HCT116 (cell line): ENCODE measurements at regions of chr20 and their contacts with region 1.

Region 1: GRCh38 chr20:26216025-26216424 is 519.4 kb upstream of the ZNF337 start:
- DNase-seq: no peak
- ATAC-seq: no peak
- H3K4me3 ChIP-seq: no peak overlapping the region
- H3K27ac ChIP-seq: no peak overlapping the region
- H3K4me1 ChIP-seq: no peaks in the 10 kb centered on the region
- H3K27me3 ChIP-seq: peaks cover 15% of the 10 kb centered on the region
- CTCF ChIP-seq: no peak
- POLR2A ChIP-seq: no peak
- RAD21 ChIP-seq: no peak

Region 2: DNA sequence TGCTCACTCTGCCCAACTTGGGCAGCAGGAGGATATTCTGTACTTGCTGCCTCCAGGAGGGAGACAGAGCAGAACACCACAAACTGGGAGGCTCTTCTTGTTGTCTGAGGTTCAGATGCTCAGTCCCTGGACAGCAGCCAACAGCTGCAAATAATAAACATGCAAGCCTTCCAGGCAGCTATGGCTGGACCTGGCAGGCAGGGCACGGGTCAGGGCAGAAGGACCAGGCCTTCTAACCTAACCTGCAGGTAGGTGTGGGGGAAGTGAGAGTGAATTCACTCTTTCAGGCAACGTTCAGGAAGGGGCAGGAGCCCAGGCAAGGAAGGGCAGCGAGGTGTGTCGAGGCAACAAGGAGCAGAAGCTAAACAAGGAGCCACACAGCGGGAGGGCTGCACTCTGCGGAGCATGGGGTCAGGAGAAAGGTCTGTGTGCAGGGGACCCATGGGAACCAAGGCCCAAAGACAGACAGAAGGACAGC is 662.2 kb before region 1 on chr20:
- CTCF ChIA-PET with region 1: no interaction called
- POLR2A ChIA-PET with region 1: no interaction called
- RAD21 ChIA-PET with region 1: no interaction called
- intact Hi-C with region 1: no loop called
- DNase-seq: no peak
- ATAC-seq: no peak
- H3K4me3 ChIP-seq: no peak overlapping the region
- H3K27ac ChIP-seq: no peak overlapping the region
- H3K4me1 ChIP-seq: peaks cover 9 to 14% of the 10 kb centered on the region in 2 experiments
- H3K27me3 ChIP-seq: no peaks in the 10 kb centered on the region
- CTCF ChIP-seq: no peak
- POLR2A ChIP-seq: no peak
- RAD21 ChIP-seq: no peak

Region 3: DNA sequence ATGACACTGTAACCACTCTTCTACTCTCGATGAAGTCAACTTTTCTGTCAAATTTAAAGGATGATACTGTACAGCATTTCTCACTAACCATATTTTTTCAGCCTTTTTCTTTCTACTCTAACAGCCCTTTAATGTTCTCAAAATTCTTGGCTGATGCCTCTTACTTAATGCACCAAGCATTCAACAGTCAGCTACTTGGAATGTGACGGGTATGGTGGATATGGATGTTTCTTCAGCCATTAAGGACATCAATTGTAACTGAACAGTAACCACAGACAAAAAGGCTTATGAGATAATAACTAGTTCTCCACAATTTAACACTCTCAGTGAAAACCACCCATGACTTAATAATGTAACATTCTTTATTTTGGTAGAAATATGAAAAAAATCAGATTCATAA is 52.1 kb before region 1 on chr20:
- CTCF ChIA-PET with region 1: no interaction called
- POLR2A ChIA-PET with region 1: no interaction called
- RAD21 ChIA-PET with region 1: no interaction called
- intact Hi-C with region 1: loop called (anchors 10 kb)
- DNase-seq: no peak
- ATAC-seq: no peak
- H3K4me3 ChIP-seq: no peak overlapping the region
- H3K27ac ChIP-seq: no peak overlapping the region
- H3K4me1 ChIP-seq: no peaks in the 10 kb centered on the region
- H3K27me3 ChIP-seq: peaks cover 8% of the 10 kb centered on the region
- CTCF ChIP-seq: no peak
- POLR2A ChIP-seq: no peak
- RAD21 ChIP-seq: no peak